GM18951 (cell line): ENCODE measurements at regions of chr10 and their contacts with region 1.

Region 1: DNA sequence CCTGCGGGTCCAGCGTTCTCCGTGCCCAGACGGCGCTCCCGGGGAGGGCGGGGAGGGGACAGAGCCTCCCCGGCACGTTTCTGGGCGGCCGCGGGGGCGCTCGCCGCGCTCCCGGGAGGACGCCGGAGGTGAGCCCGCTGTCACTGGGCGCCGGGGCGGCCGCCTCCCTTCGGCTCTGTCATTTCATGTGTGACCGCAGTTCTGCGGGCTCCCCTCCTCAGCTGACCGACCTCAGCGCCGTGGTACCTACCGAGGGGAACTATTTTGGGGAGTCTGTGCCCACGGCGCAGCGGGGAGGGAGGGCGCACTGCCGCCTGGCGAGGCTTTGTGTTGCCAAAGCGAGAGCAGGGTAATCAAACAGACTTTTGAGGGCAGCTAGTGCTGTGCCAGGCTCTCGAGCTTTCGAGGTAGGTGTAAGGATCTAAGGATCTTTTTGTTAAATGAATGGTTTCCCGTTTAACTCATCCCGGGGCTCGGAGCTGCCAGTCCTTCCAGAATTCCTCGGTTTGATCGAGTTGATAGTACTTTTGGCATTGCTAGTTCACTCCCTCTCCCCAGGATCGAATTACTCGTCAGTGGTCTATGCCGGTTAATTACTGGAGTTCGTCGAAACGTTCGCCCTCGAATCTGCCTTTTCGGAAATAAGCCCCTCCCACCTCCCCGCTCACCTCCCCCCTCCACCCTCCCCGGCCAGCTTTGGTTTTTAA is 1.9 kb downstream of the ARID5B start:
- POLR2A ChIP-seq: peak; percentile 74

Region 2: DNA sequence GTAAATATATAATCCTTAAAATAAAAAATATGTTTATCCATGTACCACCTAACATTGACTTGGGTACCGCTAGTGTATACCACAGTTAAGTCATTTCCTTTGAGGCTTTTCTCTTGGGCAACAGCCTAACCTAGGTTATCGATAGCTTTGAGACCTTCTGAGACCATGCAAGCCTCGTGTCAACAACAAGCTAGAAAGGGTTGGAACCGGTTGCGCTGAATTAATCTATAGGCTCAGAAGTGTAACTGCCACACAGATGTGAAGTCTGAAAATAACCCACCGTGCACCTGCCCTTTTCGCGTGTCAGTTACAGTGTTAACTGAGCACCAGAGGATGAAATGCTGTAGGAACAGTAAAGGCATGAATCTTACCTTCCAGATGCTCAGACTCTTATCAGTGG is 57.9 kb after region 1 on chr10:
- in situ Hi-C with region 1: loop called (anchors 5 kb)
- POLR2A ChIP-seq: no peak

Region 3: DNA sequence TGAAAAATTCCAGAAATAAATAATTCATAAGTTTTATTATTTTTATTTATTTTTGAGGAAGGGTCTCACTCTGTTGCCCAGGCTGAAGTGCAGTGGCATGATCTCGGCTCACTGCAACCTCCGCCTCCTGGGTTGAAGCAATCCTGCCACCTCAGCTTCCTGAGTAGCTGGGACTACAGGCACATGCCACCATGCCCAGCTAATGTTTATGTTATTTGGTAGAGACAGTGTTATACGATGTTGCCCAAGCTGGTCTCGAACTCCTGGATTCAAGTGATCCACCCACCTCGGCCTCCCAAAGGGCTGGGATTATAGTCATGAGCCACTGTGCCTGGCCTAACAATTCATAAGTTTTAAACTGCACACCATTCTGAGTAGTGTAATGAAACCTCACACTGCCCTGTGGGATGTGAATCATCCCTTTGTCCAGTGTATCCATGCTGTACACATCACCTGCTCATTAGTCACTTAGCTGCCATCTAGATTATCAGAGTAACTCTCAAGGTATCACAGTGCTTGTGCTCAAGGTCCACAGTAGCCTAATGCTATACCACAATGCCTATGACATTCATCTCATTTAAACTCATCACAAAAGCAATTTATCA is 347.3 kb after region 1 on chr10:
- in situ Hi-C with region 1: loop called (anchors 10 kb)
- POLR2A ChIP-seq: no peak